MCF 10A (cell line): ENCODE measurements at regions of chr5 and their contacts with region 1.

Region 1: DNA sequence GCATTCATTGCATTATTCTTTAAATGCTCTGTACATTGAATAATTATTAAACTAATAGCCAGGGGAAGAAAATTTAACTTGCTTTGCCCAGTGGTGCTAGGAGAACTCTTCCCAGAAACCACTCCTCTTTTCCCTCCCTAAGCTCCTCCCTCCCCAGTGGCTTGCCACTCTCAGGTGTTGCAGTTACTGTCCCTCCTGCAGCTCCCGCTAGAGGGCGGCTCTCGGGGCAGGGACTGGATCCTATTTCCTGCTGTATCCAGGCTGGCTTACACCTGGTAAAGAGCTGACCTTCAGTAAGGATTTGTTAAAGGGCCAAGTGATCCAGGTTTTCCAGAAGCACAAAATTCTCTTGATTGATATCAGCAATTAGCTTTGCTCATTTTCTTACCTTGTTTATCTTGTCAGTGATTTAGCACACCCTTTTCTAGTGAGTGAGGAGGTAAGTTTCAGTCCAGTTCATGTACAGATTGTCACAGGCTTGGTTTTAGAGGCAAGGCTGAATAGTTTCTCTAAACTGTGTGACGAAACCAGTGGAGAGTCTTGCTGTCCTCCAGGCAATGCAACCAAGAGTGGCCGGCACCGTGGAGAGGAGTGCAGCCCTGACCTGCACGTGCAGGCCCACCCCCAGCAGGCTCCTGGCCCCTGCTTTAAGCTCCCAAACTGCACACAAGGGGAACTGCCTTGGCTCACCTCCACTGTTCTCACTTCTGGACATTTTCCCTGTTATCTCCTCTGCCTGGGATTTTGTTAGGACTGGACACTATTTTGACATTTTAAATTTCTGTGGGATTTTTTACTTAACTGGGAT is 423.8 kb downstream of the SPOCK1 start:
- DNase-seq: peak; percentile 93
- H3K4me3 Mint-ChIP-seq: no peak overlapping the region
- H3K27ac Mint-ChIP-seq: no peak overlapping the region
- H3K4me1 Mint-ChIP-seq: peaks cover 39% of the 10 kb centered on the region
- H3K27me3 Mint-ChIP-seq: no peaks in the 10 kb centered on the region
- CTCF ChIP-seq: peak; percentile 87

Region 2: GRCh38 chr5:137086342-137086741 is 11.0 kb after region 1 on chr5:
- CTCF ChIA-PET with region 1: interaction called, 26 read pairs
- POLR2A ChIA-PET with region 1: interaction called, 4 read pairs
- intact Hi-C with region 1: no loop called
- DNase-seq: no peak
- H3K4me3 Mint-ChIP-seq: no peak overlapping the region
- H3K27ac Mint-ChIP-seq: no peak overlapping the region
- H3K4me1 Mint-ChIP-seq: peaks cover 16% of the 10 kb centered on the region
- H3K27me3 Mint-ChIP-seq: no peaks in the 10 kb centered on the region
- CTCF ChIP-seq: no peak

Region 3: DNA sequence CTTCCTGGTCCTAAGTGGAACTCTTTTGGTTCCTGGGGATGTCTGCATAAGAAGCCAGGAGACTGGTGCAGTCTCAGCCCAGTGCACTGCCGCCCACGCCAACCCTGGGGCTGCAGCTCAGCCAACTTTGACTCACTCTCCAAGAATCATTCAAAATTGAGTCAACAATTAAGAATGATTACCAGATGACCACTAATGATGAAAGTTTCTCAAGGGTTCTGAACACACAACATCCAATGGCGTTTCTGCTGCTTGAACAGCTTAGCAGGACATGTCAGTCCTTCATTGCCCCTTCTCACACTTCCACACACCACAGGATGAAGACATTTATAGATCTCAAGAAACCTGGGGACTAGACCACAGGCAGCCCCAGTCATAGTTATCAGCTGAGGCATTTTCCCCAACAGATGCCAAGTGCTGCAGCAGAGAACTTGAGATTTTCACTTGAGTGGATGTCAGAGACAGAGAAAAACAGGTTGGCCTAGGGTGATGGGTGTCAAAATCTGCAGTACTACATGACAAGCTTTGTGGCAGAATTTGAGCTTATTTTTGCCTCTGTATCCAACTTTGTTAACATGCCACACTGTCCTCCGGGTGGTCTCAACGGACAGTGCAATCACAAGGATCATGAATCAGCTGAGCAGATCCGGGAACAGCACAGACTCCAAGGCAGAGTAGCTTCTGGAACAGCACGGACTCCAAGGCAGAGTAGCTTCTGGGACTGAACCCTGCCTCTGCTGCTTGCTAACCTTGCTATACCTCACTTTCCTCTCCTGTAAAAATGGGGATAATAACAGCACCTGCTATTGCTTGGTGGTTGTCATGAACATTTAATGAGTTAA is 67.6 kb after region 1 on chr5:
- CTCF ChIA-PET with region 1: interaction called, 13 read pairs
- POLR2A ChIA-PET with region 1: interaction called, 5 read pairs
- intact Hi-C with region 1: loop called (anchors 1 kb)
- DNase-seq: peak; percentile 87
- H3K4me3 Mint-ChIP-seq: no peak overlapping the region
- H3K27ac Mint-ChIP-seq: peak overlapping the region; percentile 76
- H3K4me1 Mint-ChIP-seq: peaks cover 52% of the 10 kb centered on the region
- H3K27me3 Mint-ChIP-seq: no peaks in the 10 kb centered on the region
- CTCF ChIP-seq: no peak

Region 4: GRCh38 chr5:137234973-137235943 is 159.9 kb after region 1 on chr5:
- CTCF ChIA-PET with region 1: interaction called, 10 read pairs
- POLR2A ChIA-PET with region 1: no interaction called
- intact Hi-C with region 1: no loop called
- DNase-seq: peak; percentile 68
- H3K4me3 Mint-ChIP-seq: no peak overlapping the region
- H3K27ac Mint-ChIP-seq: peak overlapping the region; percentile 53
- H3K4me1 Mint-ChIP-seq: peaks cover 26% of the 10 kb centered on the region
- H3K27me3 Mint-ChIP-seq: no peaks in the 10 kb centered on the region
- CTCF ChIP-seq: no peak

Region 5: GRCh38 chr5:137498736-137499505 is 423.6 kb after region 1 on chr5 and contains the start of gene SPOCK1:
- CTCF ChIA-PET with region 1: interaction called, 6 read pairs
- POLR2A ChIA-PET with region 1: no interaction called
- intact Hi-C with region 1: loop called (anchors 10 kb)
- DNase-seq: peak; percentile 80
- H3K4me3 Mint-ChIP-seq: peak within 1 kb of the TSS; percentile 19
- H3K27ac Mint-ChIP-seq: no peak within 1 kb of the TSS
- H3K4me1 Mint-ChIP-seq: peaks cover 5% of the 10 kb centered on the region
- H3K27me3 Mint-ChIP-seq: no peaks in the 10 kb centered on the region
- CTCF ChIP-seq: peak; percentile 95
- total RNA-seq, gene SPOCK1: 34.3 and 61.6 TPM in 2 replicates

Region 6: GRCh38 chr5:137923856-137924255 is 848.5 kb after region 1 on chr5:
- CTCF ChIA-PET with region 1: no interaction called
- POLR2A ChIA-PET with region 1: no interaction called
- intact Hi-C with region 1: no loop called
- DNase-seq: no peak
- H3K4me3 Mint-ChIP-seq: no peak overlapping the region
- H3K27ac Mint-ChIP-seq: no peak overlapping the region
- H3K4me1 Mint-ChIP-seq: no peaks in the 10 kb centered on the region
- H3K27me3 Mint-ChIP-seq: no peaks in the 10 kb centered on the region
- CTCF ChIP-seq: no peak